ENCODE measurements at regions of chr21 and their contacts with region 1.

Region 1: GRCh38 chr21:28522014-28522799 is 470.5 kb downstream of the LTN1 start:
- DNase-seq: no peak
- ATAC-seq: peak; percentile 27 to 43

Region 2: DNA sequence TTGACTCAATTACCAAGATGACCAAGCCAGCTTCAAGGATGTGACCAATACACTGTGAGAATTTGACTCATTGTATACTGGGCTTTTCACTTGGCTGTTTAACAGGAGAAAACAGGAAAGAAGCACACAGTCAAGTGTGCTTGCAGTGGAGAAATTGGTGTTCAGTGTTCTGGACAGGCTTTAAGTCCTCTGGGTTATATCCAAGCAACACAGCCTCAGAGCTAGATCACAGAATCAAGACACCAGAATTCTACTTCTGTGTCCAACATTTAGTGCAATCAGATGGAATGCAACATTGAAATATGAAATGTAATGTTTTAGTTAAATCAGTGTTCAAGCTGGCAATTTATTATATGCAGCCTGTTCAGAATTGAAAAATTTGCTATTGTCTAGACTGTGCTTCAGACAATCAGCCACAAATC is 223.9 kb before region 1 on chr21:
- intact Hi-C with region 1: no loop called
- DNase-seq: no peak
- ATAC-seq: no peak

Region 3: DNA sequence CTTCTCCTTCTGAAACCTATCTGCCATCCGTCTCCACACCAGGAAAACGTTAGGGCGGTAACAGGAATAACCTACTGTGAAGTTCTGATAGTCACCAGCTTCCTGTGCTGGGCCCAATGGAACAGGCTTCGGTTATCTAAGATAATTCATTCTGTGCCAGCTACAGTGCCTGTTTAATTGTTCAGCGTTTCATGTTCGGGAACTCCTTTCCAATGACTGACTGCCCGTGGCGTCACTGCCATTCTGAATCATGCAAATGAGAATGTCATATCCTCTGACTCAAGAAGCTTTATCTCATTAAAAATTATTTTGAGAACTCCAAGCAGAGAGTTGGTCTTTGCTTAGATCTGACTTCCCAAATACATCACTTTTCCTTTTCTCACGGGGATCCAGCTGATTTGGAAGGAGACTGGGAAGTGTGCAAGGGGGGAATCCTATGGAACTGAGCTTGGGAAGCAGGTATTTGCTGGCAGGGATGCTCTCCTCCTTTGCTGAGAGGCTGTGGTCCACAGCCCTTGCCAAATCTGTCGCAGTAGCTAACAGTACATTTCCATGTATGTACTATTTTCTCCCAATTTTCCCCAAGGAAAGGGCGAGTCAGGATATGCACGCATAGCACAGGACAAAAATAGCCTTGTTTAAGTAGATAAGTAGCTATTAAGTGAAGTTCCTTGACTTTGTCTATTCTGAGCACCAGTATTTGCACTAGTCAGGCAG is 111.8 kb after region 1 on chr21:
- intact Hi-C with region 1: loop called in 1 of 2 experiments (anchors 5 kb)
- DNase-seq: peak; percentile 81
- ATAC-seq: peak; percentile 58 to 85

Measured in left cardiac atrium (tissue), 4 donors.